Naive thymus-derived CD4-positive, alpha-beta T cell (primary cell): ENCODE measurements at regions of chr1 and their contacts with region 1.

Region 1: GRCh38 chr1:232805269-232806185 is at the start of gene MAP10:
- DNase-seq: peak; percentile 46 to 79 (median 69)
- ATAC-seq: peak; percentile 83
- H3K4me3 ChIP-seq: peak within 1 kb of the TSS; percentile 65
- H3K4me3 Mint-ChIP-seq: peak within 1 kb of the TSS; percentile 82 to 93 (median 88)
- H3K27ac ChIP-seq: peak within 1 kb of the TSS; percentile 64
- H3K27ac Mint-ChIP-seq: peak within 1 kb of the TSS; percentile 60 to 95 (median 87)
- H3K4me1 ChIP-seq: peaks cover 7 to 12% of the 10 kb centered on the region in 2 donors
- H3K4me1 Mint-ChIP-seq: peaks cover 10 to 35% (median 22%) of the 10 kb centered on the region in 7 donors
- H3K27me3 ChIP-seq: no peaks in the 10 kb centered on the region
- H3K27me3 Mint-ChIP-seq: peaks cover 0 to 12% (median 0%) of the 10 kb centered on the region in 5 donors
- total RNA-seq, gene MAP10: 1.5 to 4.5 (median 3.2) TPM

Region 2: GRCh38 chr1:233113009-233113879 is 307.7 kb after region 1 on chr1:
- CTCF ChIA-PET with region 1: no interaction called
- POLR2A ChIA-PET with region 1: no interaction called
- intact Hi-C with region 1: loop called in 1 of 2 experiments (anchors 5 kb)
- DNase-seq: peak in 1 of 9 donors; percentile 37
- ATAC-seq: peak; percentile 91
- H3K4me3 ChIP-seq: no peak overlapping the region
- H3K4me3 Mint-ChIP-seq: peak overlapping the region in 1 of 10 donors; percentile 69
- H3K27ac ChIP-seq: no peak overlapping the region
- H3K27ac Mint-ChIP-seq: peak overlapping the region in 1 of 9 donors; percentile 85
- H3K4me1 ChIP-seq: no peaks in the 10 kb centered on the region
- H3K4me1 Mint-ChIP-seq: peaks cover 0 to 45% (median 14%) of the 10 kb centered on the region in 7 donors
- H3K27me3 ChIP-seq: no peaks in the 10 kb centered on the region
- H3K27me3 Mint-ChIP-seq: no peaks in the 10 kb centered on the region